ENCODE measurements at regions of chr7 and their contacts with region 1.

Region 1: DNA sequence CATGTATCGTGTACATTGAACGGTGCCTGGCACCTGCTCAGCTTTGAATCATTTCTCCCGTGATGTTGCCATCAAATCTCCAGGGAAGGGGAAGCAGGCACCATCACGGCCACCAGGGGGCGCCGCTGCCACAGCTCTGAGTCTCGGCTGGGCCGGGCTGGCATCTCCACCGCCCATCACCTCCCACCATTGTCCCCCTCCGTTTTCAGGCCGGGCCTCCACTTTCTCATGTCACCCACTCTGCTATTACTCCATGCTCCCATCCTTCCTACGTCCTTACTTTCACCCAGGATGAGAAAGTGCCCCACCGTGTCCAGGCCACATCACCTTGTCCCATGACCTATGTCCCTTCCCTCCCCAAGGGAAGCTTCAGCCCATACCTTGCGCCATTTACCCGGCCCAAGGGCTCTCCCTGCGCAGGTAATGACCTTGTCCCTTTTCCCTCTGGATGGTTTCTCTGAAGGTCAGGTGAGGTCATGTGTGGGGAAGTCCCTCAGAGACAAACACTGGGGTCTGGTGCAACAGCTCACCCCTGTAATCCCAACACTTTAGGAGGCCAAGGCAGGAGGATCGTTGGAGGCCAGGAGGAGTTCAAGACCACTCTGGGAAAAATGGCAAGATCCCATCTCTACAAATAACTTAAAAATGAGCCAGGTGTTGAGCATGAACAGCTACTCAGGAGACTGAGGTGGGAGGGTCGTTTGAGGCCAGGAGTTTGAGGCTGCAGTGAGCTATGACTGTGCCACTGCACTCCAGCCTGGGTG is 31.8 kb upstream of the OCM2 start:
- DNase-seq: peak; percentile 54 to 88 (median 76)
- ATAC-seq: peak; percentile 70
- H3K4me3 ChIP-seq: no peak overlapping the region
- H3K4me3 Mint-ChIP-seq: no peak overlapping the region
- H3K27ac ChIP-seq: no peak overlapping the region
- H3K27ac Mint-ChIP-seq: no peak overlapping the region
- H3K4me1 ChIP-seq: peaks cover 4% of the 10 kb centered on the region
- H3K4me1 Mint-ChIP-seq: peaks cover 5% of the 10 kb centered on the region
- H3K27me3 ChIP-seq: peaks cover 0 to 5% of the 10 kb centered on the region in 2 experiments
- H3K27me3 Mint-ChIP-seq: peaks cover 19% of the 10 kb centered on the region
- CTCF ChIP-seq: peak; percentile 95

Region 2: GRCh38 chr7:97801108-97801507 is 220.7 kb before region 1 on chr7:
- CTCF ChIA-PET with region 1: no interaction called
- POLR2A ChIA-PET with region 1: no interaction called
- intact Hi-C with region 1: no loop called
- DNase-seq: no peak
- ATAC-seq: no peak
- H3K4me3 ChIP-seq: no peak overlapping the region
- H3K4me3 Mint-ChIP-seq: no peak overlapping the region
- H3K27ac ChIP-seq: no peak overlapping the region
- H3K27ac Mint-ChIP-seq: no peak overlapping the region
- H3K4me1 ChIP-seq: no peaks in the 10 kb centered on the region
- H3K4me1 Mint-ChIP-seq: no peaks in the 10 kb centered on the region
- H3K27me3 ChIP-seq: peaks cover 3 to 7% of the 10 kb centered on the region in 2 experiments
- H3K27me3 Mint-ChIP-seq: peaks cover 54% of the 10 kb centered on the region
- CTCF ChIP-seq: no peak

Region 3: GRCh38 chr7:98168181-98168905 is 146.6 kb after region 1 on chr7:
- CTCF ChIA-PET with region 1: interaction called, 39 read pairs
- POLR2A ChIA-PET with region 1: interaction called, 8 read pairs
- intact Hi-C with region 1: loop called (anchors 1 kb)
- DNase-seq: peak; percentile 32 to 86 (median 56)
- ATAC-seq: peak; percentile 70
- H3K4me3 ChIP-seq: no peak overlapping the region
- H3K4me3 Mint-ChIP-seq: no peak overlapping the region
- H3K27ac ChIP-seq: no peak overlapping the region
- H3K27ac Mint-ChIP-seq: peak overlapping the region; percentile 30
- H3K4me1 ChIP-seq: no peaks in the 10 kb centered on the region
- H3K4me1 Mint-ChIP-seq: peaks cover 25% of the 10 kb centered on the region
- H3K27me3 ChIP-seq: no peaks in the 10 kb centered on the region
- H3K27me3 Mint-ChIP-seq: no peaks in the 10 kb centered on the region
- CTCF ChIP-seq: peak; percentile 78

Region 4: DNA sequence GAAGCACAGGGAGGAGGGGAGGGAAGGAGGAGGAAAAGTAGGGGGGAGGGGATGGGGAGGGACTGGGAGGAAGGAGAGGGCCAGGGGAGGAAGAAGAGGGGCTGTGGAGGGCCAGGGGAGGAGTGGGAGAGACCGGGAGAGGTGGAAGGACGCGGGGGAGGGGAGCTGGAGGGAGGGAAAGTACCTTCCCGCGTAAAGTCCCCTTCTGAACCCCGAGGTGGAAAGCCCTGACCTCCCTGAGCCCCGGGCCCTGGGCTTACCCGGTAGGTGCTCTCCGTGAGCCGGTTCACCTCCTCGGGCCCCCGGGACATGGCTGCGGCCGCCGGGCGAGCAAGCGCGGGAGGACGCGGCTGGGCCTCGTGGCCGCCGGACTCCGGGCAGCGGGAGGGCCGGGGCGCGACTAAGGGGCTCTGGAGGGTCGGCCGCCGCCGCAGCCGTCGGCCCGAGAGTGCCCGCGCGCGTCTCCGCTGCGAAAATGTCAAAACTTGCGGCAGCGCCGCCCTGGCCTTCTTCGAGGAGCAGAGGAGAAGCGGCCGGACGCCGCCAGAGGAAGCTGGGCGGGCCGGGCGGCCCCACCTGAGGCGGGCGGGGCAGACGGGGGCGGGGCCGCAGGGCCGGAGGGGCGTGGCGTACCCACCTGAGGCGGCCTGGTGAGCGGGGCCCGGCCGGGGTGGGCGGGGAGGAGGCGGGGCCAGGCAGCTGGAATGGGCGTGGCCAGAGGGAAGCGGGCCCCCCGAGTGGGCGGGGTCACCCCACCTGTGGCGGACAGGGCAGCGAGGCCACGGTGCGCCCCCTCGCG is 379.0 kb after region 1 on chr7 and contains the start of gene BAIAP2L1:
- CTCF ChIA-PET with region 1: interaction called, 3 read pairs
- POLR2A ChIA-PET with region 1: no interaction called
- intact Hi-C with region 1: loop called in 1 of 2 experiments (anchors 2 kb)
- DNase-seq: peak; percentile 63 to 89 (median 80)
- ATAC-seq: peak; percentile 87
- H3K4me3 ChIP-seq: peak within 1 kb of the TSS; percentile 39
- H3K4me3 Mint-ChIP-seq: peak within 1 kb of the TSS; percentile 72
- H3K27ac ChIP-seq: no peak within 1 kb of the TSS
- H3K27ac Mint-ChIP-seq: no peak within 1 kb of the TSS
- H3K4me1 ChIP-seq: peaks cover 12% of the 10 kb centered on the region
- H3K4me1 Mint-ChIP-seq: peaks cover 7% of the 10 kb centered on the region
- H3K27me3 ChIP-seq: peaks cover 0 to 7% of the 10 kb centered on the region in 2 experiments
- H3K27me3 Mint-ChIP-seq: peaks cover 24% of the 10 kb centered on the region
- CTCF ChIP-seq: no peak
- total RNA-seq, gene BAIAP2L1: 0.33 to 0.61 TPM

Region 5: GRCh38 chr7:98841179-98841997 is 819.6 kb after region 1 on chr7:
- CTCF ChIA-PET with region 1: interaction called, 3 read pairs
- POLR2A ChIA-PET with region 1: no interaction called
- intact Hi-C with region 1: loop called (anchors 2 to 5 kb)
- DNase-seq: peak; percentile 49 to 79 (median 67)
- ATAC-seq: peak; percentile 67
- H3K4me3 ChIP-seq: no peak overlapping the region
- H3K4me3 Mint-ChIP-seq: no peak overlapping the region
- H3K27ac ChIP-seq: no peak overlapping the region
- H3K27ac Mint-ChIP-seq: no peak overlapping the region
- H3K4me1 ChIP-seq: no peaks in the 10 kb centered on the region
- H3K4me1 Mint-ChIP-seq: no peaks in the 10 kb centered on the region
- H3K27me3 ChIP-seq: peaks cover 2 to 6% of the 10 kb centered on the region in 2 experiments
- H3K27me3 Mint-ChIP-seq: peaks cover 15% of the 10 kb centered on the region
- CTCF ChIP-seq: peak; percentile 90

Measured in CD4-positive, alpha-beta T cell (primary cell).